GM12878 (cell line): ENCODE measurements at regions of chr14 and their contacts with region 1.

Region 1: DNA sequence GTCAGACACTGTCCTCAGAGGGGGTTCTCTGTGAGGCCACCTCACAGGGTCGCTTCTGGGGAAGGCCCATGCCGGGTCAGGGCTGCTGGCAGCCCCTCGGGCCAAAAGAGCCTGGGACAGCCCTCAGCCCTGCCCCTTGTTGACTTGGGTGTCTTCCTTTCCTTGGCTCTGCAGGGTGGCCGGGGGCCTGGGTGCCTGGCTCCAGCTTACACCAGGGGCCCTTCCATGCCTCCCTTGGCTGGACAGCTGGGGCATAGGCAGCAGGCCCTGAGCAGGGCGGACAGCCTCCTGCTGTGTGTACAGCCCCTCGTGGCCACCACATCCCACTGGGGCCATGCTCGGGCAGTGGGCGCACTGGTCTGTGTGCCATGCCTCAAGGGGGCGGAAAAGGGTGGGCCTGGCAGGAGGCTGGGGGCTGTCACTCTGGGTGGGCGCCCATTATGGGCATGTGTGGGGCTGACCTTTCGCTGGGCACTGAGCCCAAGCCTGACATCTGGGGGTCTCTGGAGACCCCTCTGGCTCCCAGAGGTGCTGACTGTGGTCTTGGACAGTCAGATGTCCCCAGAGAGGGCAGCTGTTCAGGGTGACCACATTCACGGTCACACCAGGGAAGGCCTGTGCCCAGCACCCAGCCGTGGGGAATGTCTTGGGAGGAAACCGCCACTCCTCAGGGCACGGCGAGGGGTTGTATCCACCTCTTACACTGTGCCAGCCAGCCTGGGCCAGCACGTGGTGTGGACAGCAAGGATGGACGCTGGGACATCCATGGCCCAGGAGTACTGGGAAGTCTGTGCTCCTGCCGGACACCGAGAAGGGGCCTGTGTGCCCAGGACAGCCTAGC is 313.3 kb downstream of the TMEM121 start:
- DNase-seq: no peak
- ATAC-seq: no peak
- H3K4me3 ChIP-seq: no peak overlapping the region
- H3K27ac ChIP-seq: no peak overlapping the region
- H3K4me1 ChIP-seq: no peaks in the 10 kb centered on the region
- H3K27me3 ChIP-seq: no peaks in the 10 kb centered on the region
- CTCF ChIP-seq: no peak
- EP300 ChIP-seq: no peak
- POLR2A ChIP-seq: no peak
- RAD21 ChIP-seq: no peak

Region 2: DNA sequence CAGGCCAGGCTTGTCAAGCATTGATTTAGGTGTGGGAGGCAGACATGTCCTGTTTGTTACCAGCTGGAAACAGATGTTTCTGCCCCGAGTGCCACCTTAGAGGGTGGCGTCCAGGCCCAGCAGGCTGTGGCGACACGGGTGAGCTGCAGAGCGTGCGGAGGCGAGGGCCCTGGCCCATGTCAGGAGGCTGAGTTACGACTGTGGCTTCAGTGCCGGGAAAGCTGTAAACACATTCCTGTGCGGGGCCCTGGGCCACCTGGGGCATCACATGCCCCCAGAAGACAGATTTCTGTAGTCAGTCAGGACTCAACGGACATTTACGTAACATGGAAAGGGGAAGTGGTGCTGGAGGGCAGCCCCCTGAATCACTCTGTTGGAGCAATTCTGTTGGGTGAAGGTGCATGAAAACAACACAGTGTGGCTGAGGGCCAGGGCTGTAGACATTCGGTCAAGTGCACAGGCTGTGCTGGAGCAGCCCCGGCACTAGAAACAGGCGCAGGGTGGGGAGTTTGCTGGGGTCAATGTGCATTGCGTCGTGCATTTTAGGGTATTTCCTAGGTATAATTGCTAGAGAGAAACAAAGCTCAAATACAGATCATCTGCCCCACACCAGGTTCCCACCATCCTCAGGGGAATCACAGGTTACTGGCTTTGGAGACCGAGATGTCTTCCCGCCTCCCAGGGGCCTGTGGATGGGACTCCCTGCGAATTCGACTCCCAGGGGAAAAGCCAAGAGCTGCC is 21.5 kb before region 1 on chr14:
- CTCF ChIA-PET with region 1: interaction called, 14 read pairs
- POLR2A ChIA-PET with region 1: no interaction called
- RAD21 ChIA-PET with region 1: interaction called, 3 read pairs
- SMC1A ChIA-PET with region 1: no interaction called
- in situ Hi-C with region 1: no loop called
- intact Hi-C with region 1: no loop called
- DNase-seq: peak; percentile 71
- ATAC-seq: peak; percentile 95
- H3K4me3 ChIP-seq: no peak overlapping the region
- H3K27ac ChIP-seq: peak overlapping the region; percentile 31
- H3K4me1 ChIP-seq: peaks cover 16% of the 10 kb centered on the region
- H3K27me3 ChIP-seq: no peaks in the 10 kb centered on the region
- CTCF ChIP-seq: no peak
- EP300 ChIP-seq: peak in 1 of 2 experiments; percentile 31; a peak in 1 of 4 replicates
- POLR2A ChIP-seq: no peak
- RAD21 ChIP-seq: no peak

Region 3: DNA sequence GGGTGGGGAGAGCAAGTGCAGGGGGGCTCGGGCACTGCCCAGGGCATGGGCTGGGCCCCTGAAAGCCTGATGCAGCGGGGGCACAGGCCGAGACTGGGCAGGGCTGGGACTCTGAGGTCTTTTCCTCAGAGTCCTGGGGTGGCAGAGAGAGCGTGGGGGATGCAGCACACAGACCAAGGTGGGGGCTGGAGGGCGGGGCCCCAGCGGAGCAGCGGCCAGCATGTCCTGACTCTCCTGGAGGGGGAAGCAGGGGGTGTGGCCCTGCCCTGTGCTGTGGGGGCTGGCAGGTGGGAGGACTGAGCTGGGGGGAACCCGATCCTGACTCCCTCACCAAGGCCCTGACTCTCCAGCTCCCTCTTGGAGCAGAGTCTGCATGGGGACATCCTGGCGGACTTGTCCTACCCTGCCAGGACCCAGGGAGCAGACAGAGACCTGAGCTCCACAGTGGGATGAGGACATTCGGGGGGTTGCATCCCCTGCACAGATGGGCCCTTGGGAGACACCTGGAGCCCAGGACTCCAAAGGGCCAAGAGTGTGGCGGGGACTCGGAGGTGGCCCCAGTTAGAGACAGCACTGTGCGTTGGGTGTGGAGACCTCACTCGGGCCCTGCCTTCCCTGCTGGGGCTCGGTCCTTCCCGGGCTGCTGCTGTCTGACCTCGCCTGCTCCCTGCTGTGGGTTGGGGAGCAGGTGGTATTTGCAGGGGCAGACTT is 12.9 kb after region 1 on chr14:
- CTCF ChIA-PET with region 1: no interaction called
- POLR2A ChIA-PET with region 1: no interaction called
- RAD21 ChIA-PET with region 1: no interaction called
- SMC1A ChIA-PET with region 1: no interaction called
- in situ Hi-C with region 1: no loop called
- intact Hi-C with region 1: no loop called
- DNase-seq: no peak
- ATAC-seq: peak; percentile 10
- H3K4me3 ChIP-seq: no peak overlapping the region
- H3K27ac ChIP-seq: no peak overlapping the region
- H3K4me1 ChIP-seq: no peaks in the 10 kb centered on the region; the same call in 1 of the 2 replicates
- H3K27me3 ChIP-seq: no peaks in the 10 kb centered on the region
- CTCF ChIP-seq: no peak
- EP300 ChIP-seq: no peak
- POLR2A ChIP-seq: peak; percentile 39
- RAD21 ChIP-seq: no peak

Region 4: DNA sequence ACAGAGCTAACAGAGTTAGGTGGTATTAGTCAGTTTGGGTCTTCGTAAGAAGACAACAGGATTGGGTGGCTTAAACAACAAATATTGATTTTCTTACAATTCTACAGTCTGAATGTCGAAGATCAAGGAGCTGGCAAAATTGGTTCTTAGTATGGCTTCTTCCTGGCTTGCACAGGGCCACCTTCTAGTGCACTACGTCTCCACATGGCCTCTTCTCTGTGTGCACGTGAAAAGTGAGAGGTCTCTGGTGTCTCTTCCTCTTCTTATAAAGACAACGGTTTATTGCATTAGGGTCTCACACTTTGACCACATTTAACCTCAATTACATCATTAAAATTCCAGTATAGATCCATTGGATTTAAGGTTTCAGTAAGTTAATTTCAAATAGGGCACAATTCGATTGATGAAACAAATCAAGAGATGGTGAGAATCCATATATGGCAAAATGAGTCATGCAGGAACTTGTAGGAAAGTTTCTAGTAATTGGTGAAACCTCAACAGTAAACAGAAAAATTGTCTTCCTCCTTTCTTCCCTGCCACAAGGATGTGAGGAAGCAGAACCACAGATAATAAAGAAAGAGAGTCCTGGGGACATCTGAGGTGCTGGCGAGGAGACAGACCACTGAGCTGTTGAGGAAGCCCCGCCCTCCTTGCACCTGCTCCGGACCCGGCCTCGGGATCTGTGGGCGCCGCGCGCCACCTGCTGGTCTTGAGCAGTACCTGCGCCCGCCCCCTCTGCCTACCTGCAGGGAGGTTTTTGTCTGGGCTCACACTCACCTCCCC is 533.4 kb after region 1 on chr14:
- CTCF ChIA-PET with region 1: no interaction called
- POLR2A ChIA-PET with region 1: no interaction called
- RAD21 ChIA-PET with region 1: no interaction called
- SMC1A ChIA-PET with region 1: no interaction called
- in situ Hi-C with region 1: no loop called
- intact Hi-C with region 1: loop called (anchors 5 kb)
- DNase-seq: no peak
- ATAC-seq: peak; percentile 99
- H3K4me3 ChIP-seq: no peak overlapping the region
- H3K27ac ChIP-seq: no peak overlapping the region
- H3K4me1 ChIP-seq: peaks cover 6% of the 10 kb centered on the region; the same call in 1 of the 2 replicates
- H3K27me3 ChIP-seq: no peaks in the 10 kb centered on the region; a peak in 2 of 4 replicates
- CTCF ChIP-seq: peak; percentile 86 to 93 (median 89)
- EP300 ChIP-seq: 0 out of 4 replicates have a peak, but pooled peaks of 1 of the 2 experiments have one; percentile 9
- POLR2A ChIP-seq: no peak
- RAD21 ChIP-seq: peak; percentile 88